A673 (cell line): ENCODE measurements at regions of chr13 and their contacts with region 1.

Region 1: GRCh38 chr13:77329133-77329910 is 2.4 kb upstream of the MYCBP2 start:
- DNase-seq: peak; percentile 97
- H3K4me3 ChIP-seq: peak overlapping the region; percentile 80
- H3K27ac ChIP-seq: peak overlapping the region; percentile 89
- H3K4me1 ChIP-seq: peaks cover 20% of the 10 kb centered on the region
- H3K27me3 ChIP-seq: no peaks in the 10 kb centered on the region
- CTCF ChIP-seq: no peak

Region 2: GRCh38 chr13:77480066-77480465 is 150.7 kb after region 1 on chr13:
- CTCF ChIA-PET with region 1: interaction called, 3 read pairs
- POLR2A ChIA-PET with region 1: no interaction called
- intact Hi-C with region 1: loop called (anchors 5 kb)
- DNase-seq: peak; percentile 8
- H3K4me3 ChIP-seq: no peak overlapping the region
- H3K27ac ChIP-seq: no peak overlapping the region
- H3K4me1 ChIP-seq: peaks cover 6% of the 10 kb centered on the region
- H3K27me3 ChIP-seq: peaks cover 2% of the 10 kb centered on the region
- CTCF ChIP-seq: no peak